ENCODE measurements at regions of chr10 and their contacts with region 1.

Region 1: GRCh38 chr10:67779465-67780203 is 58.4 kb downstream of the DNAJC12 start:
- DNase-seq: peak; percentile 54
- ATAC-seq: peak; percentile 79
- H3K4me3 Mint-ChIP-seq: no peak overlapping the region
- H3K27ac Mint-ChIP-seq: no peak overlapping the region
- H3K4me1 Mint-ChIP-seq: no peaks in the 10 kb centered on the region
- H3K27me3 Mint-ChIP-seq: no peaks in the 10 kb centered on the region; the same call in 1 of the 2 replicates
- CTCF ChIP-seq: peak; percentile 73

Region 2: DNA sequence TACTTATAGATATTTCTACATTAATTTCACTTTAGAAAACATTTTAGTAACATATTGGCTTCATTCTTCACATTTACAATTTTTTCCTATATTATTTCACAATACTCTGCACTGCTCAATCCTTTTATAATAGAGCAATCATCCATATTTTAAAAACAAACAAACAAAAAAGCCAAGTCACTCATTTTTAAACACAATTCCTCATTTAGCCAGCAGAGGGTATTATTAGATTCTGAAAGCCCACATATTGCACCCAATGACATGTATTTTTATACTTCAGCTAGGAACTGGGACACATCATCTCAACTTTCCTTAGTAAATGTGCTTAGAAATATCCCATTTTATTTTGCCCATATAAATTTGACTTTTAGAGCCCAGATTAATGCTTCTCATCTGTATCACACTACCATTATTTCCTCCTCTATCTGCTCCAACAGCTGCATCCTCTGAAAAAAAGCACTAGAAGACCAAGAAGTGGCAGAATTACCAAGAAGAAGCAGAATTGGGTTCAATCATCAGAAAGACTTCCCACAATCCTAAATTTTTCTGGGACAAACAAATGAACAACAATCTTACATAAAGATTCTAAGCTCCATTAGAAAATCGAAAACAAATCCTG is 113.1 kb before region 1 on chr10:
- CTCF ChIA-PET with region 1: interaction called, 21 read pairs
- POLR2A ChIA-PET with region 1: no interaction called
- DNase-seq: no peak
- ATAC-seq: no peak
- H3K4me3 Mint-ChIP-seq: no peak overlapping the region
- H3K27ac Mint-ChIP-seq: no peak overlapping the region
- H3K4me1 Mint-ChIP-seq: peaks cover 5% of the 10 kb centered on the region; the same call in 1 of the 2 replicates
- H3K27me3 Mint-ChIP-seq: no peaks in the 10 kb centered on the region
- CTCF ChIP-seq: peak; percentile 25; the same call in 1 of the 2 replicates

Region 3: GRCh38 chr10:67697724-67698131 is 81.9 kb before region 1 on chr10:
- CTCF ChIA-PET with region 1: interaction called, 48 read pairs
- POLR2A ChIA-PET with region 1: interaction called, 3 read pairs
- DNase-seq: no peak
- ATAC-seq: peak; percentile 87
- H3K4me3 Mint-ChIP-seq: no peak overlapping the region
- H3K27ac Mint-ChIP-seq: no peak overlapping the region
- H3K4me1 Mint-ChIP-seq: peaks cover 4% of the 10 kb centered on the region
- H3K27me3 Mint-ChIP-seq: peaks cover 5% of the 10 kb centered on the region; the same call in 1 of the 2 replicates
- CTCF ChIP-seq: peak; percentile 50

Measured in WTC11 (cell line).